CD4-positive, alpha-beta T cell (primary cell): ENCODE measurements at regions of chr16 and their contacts with region 1.

Region 1: GRCh38 chr16:2513405-2514322 is at the start of gene ATP6V0C:
- DNase-seq: peak; percentile 84 to 96 (median 90)
- ATAC-seq: peak; percentile 88
- H3K4me3 ChIP-seq: peak within 1 kb of the TSS; percentile 71
- H3K4me3 Mint-ChIP-seq: peak within 1 kb of the TSS; percentile 95
- H3K27ac ChIP-seq: peak within 1 kb of the TSS; percentile 91 to 96
- H3K27ac Mint-ChIP-seq: peak within 1 kb of the TSS; percentile 100
- H3K4me1 ChIP-seq: peaks cover 53% of the 10 kb centered on the region
- H3K4me1 Mint-ChIP-seq: peaks cover 60% of the 10 kb centered on the region
- H3K27me3 ChIP-seq: no peaks in the 10 kb centered on the region
- H3K27me3 Mint-ChIP-seq: no peaks in the 10 kb centered on the region
- CTCF ChIP-seq: no peak
- total RNA-seq, gene ATP6V0C: 224 to 234 TPM

Region 2: DNA sequence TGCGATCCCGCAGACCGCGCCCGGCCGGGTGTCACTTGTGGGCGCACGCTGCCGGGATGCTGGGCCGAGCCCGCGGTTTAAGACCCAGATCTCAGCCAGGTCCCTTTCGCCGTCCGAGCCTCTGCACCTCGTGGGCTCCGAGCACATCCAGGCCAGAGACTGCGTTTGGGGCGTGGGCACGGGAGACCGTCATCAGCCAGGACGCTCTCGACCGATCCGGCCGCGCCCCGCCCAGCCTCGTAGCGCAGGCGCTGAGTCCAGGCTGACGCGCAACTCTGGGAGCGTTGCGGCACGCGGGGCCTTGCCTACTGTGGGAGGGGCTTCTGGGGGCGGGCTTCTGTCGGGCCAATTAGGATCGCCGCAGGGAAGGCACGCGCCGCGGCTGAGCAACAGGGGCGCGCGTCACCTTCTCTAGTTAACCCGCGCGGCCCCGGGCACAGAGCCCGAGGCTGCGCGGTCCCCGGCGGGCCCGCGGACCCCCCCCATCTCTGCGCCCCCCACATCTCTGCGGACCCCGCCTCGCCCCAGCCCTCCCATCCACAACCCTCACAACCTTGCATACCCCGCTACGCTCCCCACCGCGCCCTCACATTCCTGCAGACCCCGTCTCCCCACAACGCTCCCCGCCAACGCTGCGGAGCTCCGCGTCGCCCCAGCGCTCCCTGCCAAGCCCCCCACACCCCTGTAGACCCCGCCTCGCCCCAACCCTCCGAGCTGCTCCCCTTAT is 18.3 kb after region 1 on chr16:
- CTCF ChIA-PET with region 1: interaction called, 3 read pairs
- POLR2A ChIA-PET with region 1: interaction called, 135 read pairs
- intact Hi-C with region 1: loop called (anchors 2 kb)
- DNase-seq: peak; percentile 92 to 99 (median 97)
- ATAC-seq: peak; percentile 86
- H3K4me3 ChIP-seq: peak overlapping the region; percentile 94
- H3K4me3 Mint-ChIP-seq: peak overlapping the region; percentile 95
- H3K27ac ChIP-seq: peak overlapping the region; percentile 94 to 95
- H3K27ac Mint-ChIP-seq: peak overlapping the region; percentile 98
- H3K4me1 ChIP-seq: peaks cover 28% of the 10 kb centered on the region
- H3K4me1 Mint-ChIP-seq: peaks cover 22% of the 10 kb centered on the region
- H3K27me3 ChIP-seq: no peaks in the 10 kb centered on the region
- H3K27me3 Mint-ChIP-seq: peaks cover 8% of the 10 kb centered on the region
- CTCF ChIP-seq: no peak

Region 3: GRCh38 chr16:2537453-2538379 is 24.1 kb after region 1 on chr16 and contains the start of gene PDPK1:
- CTCF ChIA-PET with region 1: interaction called, 3 read pairs
- POLR2A ChIA-PET with region 1: interaction called, 135 read pairs
- intact Hi-C with region 1: loop called in 1 of 2 experiments (anchors 2 kb)
- DNase-seq: peak; percentile 85 to 98 (median 92)
- ATAC-seq: peak; percentile 87
- H3K4me3 ChIP-seq: peak within 1 kb of the TSS; percentile 72
- H3K4me3 Mint-ChIP-seq: peak within 1 kb of the TSS; percentile 92
- H3K27ac ChIP-seq: peak within 1 kb of the TSS in 1 of 2 donors; percentile 68
- H3K27ac Mint-ChIP-seq: peak within 1 kb of the TSS; percentile 94
- H3K4me1 ChIP-seq: peaks cover 53% of the 10 kb centered on the region
- H3K4me1 Mint-ChIP-seq: peaks cover 37% of the 10 kb centered on the region
- H3K27me3 ChIP-seq: no peaks in the 10 kb centered on the region
- H3K27me3 Mint-ChIP-seq: peaks cover 3% of the 10 kb centered on the region
- CTCF ChIP-seq: no peak
- total RNA-seq, gene PDPK1: 46.1 to 51.1 TPM